ENCODE measurements at regions of chr11 and their contacts with region 1.

Region 1: GRCh38 chr11:6746086-6746618 is 25.6 kb downstream of the OR2AG2 start:
- DNase-seq: peak; percentile 68
- ATAC-seq: peak; percentile 83
- H3K4me3 ChIP-seq: peak overlapping the region; percentile 71
- H3K27ac ChIP-seq: peak overlapping the region; percentile 99
- H3K4me1 ChIP-seq: peaks cover 22% of the 10 kb centered on the region; the same call in 1 of the 2 replicates
- H3K27me3 ChIP-seq: no peaks in the 10 kb centered on the region
- CTCF ChIP-seq: no peak
- EP300 ChIP-seq: no peak
- POLR2A ChIP-seq: peak; percentile 83
- RAD21 ChIP-seq: no peak

Region 2: DNA sequence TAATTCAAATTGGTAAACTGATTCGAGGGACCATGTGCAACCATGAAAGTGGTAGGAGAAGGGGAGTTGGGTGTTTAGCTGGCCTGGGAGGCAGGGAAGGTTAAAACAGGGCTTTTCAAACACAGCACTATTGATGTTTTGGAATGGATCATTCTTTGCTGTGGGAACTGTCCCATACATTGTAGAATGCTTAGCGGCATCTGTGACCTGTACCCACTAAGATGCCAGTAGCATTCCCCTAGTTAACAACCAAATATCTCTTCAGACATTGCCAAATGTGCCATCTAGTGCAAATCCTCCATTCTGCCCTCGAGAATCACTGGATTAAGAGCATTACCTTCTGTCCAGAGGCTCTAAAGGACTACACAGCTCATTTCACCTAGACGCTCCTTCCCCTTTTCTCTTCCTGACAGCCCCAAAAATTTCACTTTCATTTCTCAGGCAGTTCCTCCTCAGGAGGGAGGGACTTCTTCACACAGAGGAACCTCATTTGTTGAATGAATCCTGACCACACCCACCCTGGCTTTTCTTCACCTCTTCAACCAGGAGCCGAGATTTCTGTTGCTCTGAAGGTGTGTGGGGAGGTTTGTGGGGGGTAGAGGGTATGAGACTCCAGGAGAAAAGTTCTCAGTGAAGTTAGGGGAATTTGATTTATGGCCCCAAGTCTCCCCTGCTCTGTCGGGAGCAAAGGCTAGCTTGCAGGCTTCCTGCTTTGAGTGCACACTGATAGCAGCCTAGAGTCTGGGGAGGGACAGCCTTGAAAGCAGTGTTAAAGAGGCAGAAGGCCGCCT is 1121.5 kb before region 1 on chr11 and contains the start of gene TRIM34:
- CTCF ChIA-PET with region 1: no interaction called
- POLR2A ChIA-PET with region 1: no interaction called
- RAD21 ChIA-PET with region 1: no interaction called
- SMC1A ChIA-PET with region 1: no interaction called
- in situ Hi-C with region 1: loop called (anchors 10 kb)
- intact Hi-C with region 1: no loop called
- DNase-seq: peak; percentile 90
- ATAC-seq: peak; percentile 94
- H3K4me3 ChIP-seq: peak within 1 kb of the TSS; percentile 97
- H3K27ac ChIP-seq: peak within 1 kb of the TSS; percentile 100
- H3K4me1 ChIP-seq: peaks cover 2% of the 10 kb centered on the region; the same call in 1 of the 2 replicates
- H3K27me3 ChIP-seq: no peaks in the 10 kb centered on the region
- CTCF ChIP-seq: no peak
- EP300 ChIP-seq: no peak
- POLR2A ChIP-seq: peak; percentile 84
- RAD21 ChIP-seq: no peak
- polyA plus RNA-seq, gene TRIM34: 22.0 to 33.6 TPM

Region 3: GRCh38 chr11:5690216-5690615 is 1055.9 kb before region 1 on chr11:
- CTCF ChIA-PET with region 1: no interaction called
- POLR2A ChIA-PET with region 1: no interaction called
- RAD21 ChIA-PET with region 1: no interaction called
- SMC1A ChIA-PET with region 1: no interaction called
- in situ Hi-C with region 1: no loop called
- intact Hi-C with region 1: loop called (anchors 10 kb)
- DNase-seq: no peak
- ATAC-seq: peak; percentile 11
- H3K4me3 ChIP-seq: peak overlapping the region; percentile 78
- H3K27ac ChIP-seq: peak overlapping the region; percentile 100
- H3K4me1 ChIP-seq: peaks cover 8% of the 10 kb centered on the region
- H3K27me3 ChIP-seq: no peaks in the 10 kb centered on the region
- CTCF ChIP-seq: no peak
- EP300 ChIP-seq: no peak
- POLR2A ChIP-seq: no peak
- RAD21 ChIP-seq: no peak

Region 4: DNA sequence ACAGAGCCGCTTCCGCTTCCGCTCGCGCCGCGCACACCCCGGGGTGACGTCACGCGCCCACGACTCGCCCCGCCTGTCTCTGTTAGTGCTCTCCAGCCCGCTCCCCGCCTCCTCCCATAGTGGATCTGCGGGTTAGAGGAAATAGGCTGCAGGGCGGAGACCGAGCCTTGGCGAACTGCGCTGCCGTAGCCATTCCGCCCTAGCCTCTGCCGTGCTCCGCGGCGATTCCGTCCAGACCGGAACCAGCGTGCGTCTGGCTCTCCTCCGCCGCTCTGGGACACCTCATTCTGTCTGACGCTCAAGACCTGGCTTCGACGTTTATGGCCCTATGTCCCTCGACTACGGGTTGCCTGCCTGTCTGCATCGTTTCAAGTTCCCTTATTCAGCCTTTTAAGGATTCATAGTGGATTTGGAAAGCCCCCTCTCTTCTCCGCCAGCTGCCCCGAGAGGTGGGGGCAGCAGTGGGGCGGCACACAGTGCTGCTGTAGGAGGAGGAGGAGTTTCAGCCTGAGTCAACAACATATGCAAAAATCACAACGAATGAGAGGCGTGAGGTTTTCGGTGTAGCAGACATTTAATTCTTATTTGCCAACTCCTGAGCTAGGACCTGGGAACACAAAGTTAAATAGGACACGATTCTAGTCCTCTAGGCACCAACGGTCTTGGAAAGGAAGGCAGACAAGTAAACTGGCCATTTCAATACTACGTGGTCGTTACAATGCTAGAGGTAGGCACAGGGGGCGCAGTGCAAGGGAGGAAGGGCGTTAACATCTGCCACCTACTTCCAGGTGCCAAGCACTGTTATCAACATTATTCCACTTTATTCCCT is 133.7 kb before region 1 on chr11 and contains the start of gene TAF10:
- CTCF ChIA-PET with region 1: no interaction called
- POLR2A ChIA-PET with region 1: interaction called, 4 read pairs
- RAD21 ChIA-PET with region 1: no interaction called
- SMC1A ChIA-PET with region 1: interaction called, 5 read pairs
- in situ Hi-C with region 1: no loop called
- intact Hi-C with region 1: loop called (anchors 5 kb)
- DNase-seq: peak; percentile 77
- ATAC-seq: peak; percentile 92
- H3K4me3 ChIP-seq: peak within 1 kb of the TSS; percentile 87
- H3K27ac ChIP-seq: peak within 1 kb of the TSS; percentile 99
- H3K4me1 ChIP-seq: peaks cover 25% of the 10 kb centered on the region
- H3K27me3 ChIP-seq: no peaks in the 10 kb centered on the region
- CTCF ChIP-seq: peak; percentile 30 to 62 (median 42); a peak in 5 of 6 replicates
- EP300 ChIP-seq: no peak
- POLR2A ChIP-seq: peak; percentile 96
- RAD21 ChIP-seq: no peak
- polyA plus RNA-seq, gene TAF10: 27.2 to 78.9 TPM

Region 5: GRCh38 chr11:6900327-6900999 is 154.3 kb after region 1 on chr11:
- CTCF ChIA-PET with region 1: no interaction called
- POLR2A ChIA-PET with region 1: no interaction called
- RAD21 ChIA-PET with region 1: no interaction called
- SMC1A ChIA-PET with region 1: no interaction called
- in situ Hi-C with region 1: no loop called
- intact Hi-C with region 1: no loop called
- DNase-seq: no peak
- ATAC-seq: peak; percentile 42; the same call in 2 of the 3 replicates
- H3K4me3 ChIP-seq: no peak overlapping the region
- H3K27ac ChIP-seq: no peak overlapping the region
- H3K4me1 ChIP-seq: no peaks in the 10 kb centered on the region
- H3K27me3 ChIP-seq: no peaks in the 10 kb centered on the region; a peak in 1 of 4 replicates
- CTCF ChIP-seq: peak in 1 of 3 experiments; percentile 17; a peak in 2 of 6 replicates
- EP300 ChIP-seq: no peak
- POLR2A ChIP-seq: no peak
- RAD21 ChIP-seq: no peak

Region 6: GRCh38 chr11:6962673-6963072 is 216.5 kb after region 1 on chr11:
- CTCF ChIA-PET with region 1: no interaction called
- POLR2A ChIA-PET with region 1: no interaction called
- RAD21 ChIA-PET with region 1: no interaction called
- SMC1A ChIA-PET with region 1: no interaction called
- in situ Hi-C with region 1: no loop called
- intact Hi-C with region 1: no loop called
- DNase-seq: no peak
- ATAC-seq: peak; percentile 90
- H3K4me3 ChIP-seq: no peak overlapping the region
- H3K27ac ChIP-seq: peak overlapping the region; percentile 48
- H3K4me1 ChIP-seq: no peaks in the 10 kb centered on the region
- H3K27me3 ChIP-seq: no peaks in the 10 kb centered on the region
- CTCF ChIP-seq: no peak
- EP300 ChIP-seq: no peak
- POLR2A ChIP-seq: no peak
- RAD21 ChIP-seq: no peak